CD8-positive, alpha-beta T cell (primary cell): ENCODE measurements at regions of chr15 and their contacts with region 1.

Region 1: GRCh38 chr15:29747837-29748417 is 74.3 kb downstream of the TJP1 start:
- DNase-seq: peak in 1 of 9 experiments; percentile 11
- ATAC-seq: no peak
- H3K4me3 ChIP-seq: no peak overlapping the region
- H3K4me3 Mint-ChIP-seq: no peak overlapping the region
- H3K27ac ChIP-seq: no peak overlapping the region
- H3K27ac Mint-ChIP-seq: no peak overlapping the region
- H3K4me1 ChIP-seq: no peaks in the 10 kb centered on the region
- H3K4me1 Mint-ChIP-seq: no peaks in the 10 kb centered on the region
- H3K27me3 ChIP-seq: no peaks in the 10 kb centered on the region
- H3K27me3 Mint-ChIP-seq: peaks cover 20% of the 10 kb centered on the region
- CTCF ChIP-seq: peak; percentile 44

Region 2: GRCh38 chr15:29704950-29705597 is 42.9 kb before region 1 on chr15:
- CTCF ChIA-PET with region 1: no interaction called
- POLR2A ChIA-PET with region 1: no interaction called
- intact Hi-C with region 1: no loop called
- DNase-seq: no peak
- ATAC-seq: no peak
- H3K4me3 ChIP-seq: no peak overlapping the region
- H3K4me3 Mint-ChIP-seq: no peak overlapping the region
- H3K27ac ChIP-seq: no peak overlapping the region
- H3K27ac Mint-ChIP-seq: no peak overlapping the region
- H3K4me1 ChIP-seq: no peaks in the 10 kb centered on the region
- H3K4me1 Mint-ChIP-seq: no peaks in the 10 kb centered on the region
- H3K27me3 ChIP-seq: no peaks in the 10 kb centered on the region
- H3K27me3 Mint-ChIP-seq: no peaks in the 10 kb centered on the region
- CTCF ChIP-seq: no peak

Region 3: DNA sequence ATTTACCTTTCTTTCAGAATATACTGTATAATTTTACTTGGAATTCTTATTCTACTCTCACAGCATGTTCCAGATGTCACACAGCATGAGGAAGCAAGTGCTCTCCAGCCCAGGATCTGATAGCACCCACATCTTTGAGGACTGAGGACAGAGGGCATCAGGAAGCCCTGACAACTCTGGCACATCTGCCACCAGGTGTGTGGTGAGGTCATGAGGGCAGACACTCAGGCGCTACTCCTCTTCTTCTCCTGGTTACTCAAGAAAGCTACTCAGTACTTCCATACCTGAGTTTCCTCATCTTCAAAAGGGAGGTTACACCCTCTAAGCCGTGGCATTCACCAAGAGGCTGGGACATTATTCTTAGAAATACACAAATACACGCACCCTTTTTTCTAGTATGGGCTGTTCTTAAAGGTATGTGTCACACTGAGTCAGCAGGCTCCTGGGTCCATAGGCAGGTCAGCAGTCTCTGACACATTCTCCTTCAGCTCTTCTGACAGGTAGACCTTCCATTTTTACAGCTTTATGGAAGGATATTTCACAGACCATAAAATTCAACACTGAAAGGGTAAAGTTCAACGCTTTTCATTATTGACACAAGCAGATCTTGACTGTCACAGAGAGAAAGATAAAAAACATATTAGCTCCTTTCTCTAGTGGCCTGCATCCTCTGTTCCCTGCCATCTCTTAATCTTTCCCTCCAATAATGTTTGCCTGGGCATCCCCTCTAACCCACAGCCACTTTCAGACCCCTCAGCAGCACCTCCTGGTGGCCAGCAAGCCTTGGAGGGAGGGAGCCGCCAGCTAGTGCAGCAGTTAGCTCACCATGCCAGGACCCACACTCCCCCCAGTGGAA is 177.5 kb after region 1 on chr15:
- CTCF ChIA-PET with region 1: interaction called, 11 read pairs
- POLR2A ChIA-PET with region 1: no interaction called
- intact Hi-C with region 1: loop called in 1 of 2 experiments (anchors 5 kb)
- DNase-seq: peak in 4 of 9 experiments; percentile 12 to 42 (median 18)
- ATAC-seq: no peak
- H3K4me3 ChIP-seq: no peak overlapping the region
- H3K4me3 Mint-ChIP-seq: no peak overlapping the region
- H3K27ac ChIP-seq: no peak overlapping the region
- H3K27ac Mint-ChIP-seq: no peak overlapping the region
- H3K4me1 ChIP-seq: no peaks in the 10 kb centered on the region
- H3K4me1 Mint-ChIP-seq: no peaks in the 10 kb centered on the region
- H3K27me3 ChIP-seq: no peaks in the 10 kb centered on the region
- H3K27me3 Mint-ChIP-seq: peaks cover 34% of the 10 kb centered on the region
- CTCF ChIP-seq: no peak

Region 4: GRCh38 chr15:30073915-30074314 is 326.0 kb after region 1 on chr15:
- CTCF ChIA-PET with region 1: interaction called, 3 read pairs
- POLR2A ChIA-PET with region 1: no interaction called
- intact Hi-C with region 1: loop called in 1 of 2 experiments (anchors 10 kb)
- DNase-seq: no peak
- ATAC-seq: no peak
- H3K4me3 ChIP-seq: no peak overlapping the region
- H3K4me3 Mint-ChIP-seq: no peak overlapping the region
- H3K27ac ChIP-seq: no peak overlapping the region
- H3K27ac Mint-ChIP-seq: no peak overlapping the region
- H3K4me1 ChIP-seq: no peaks in the 10 kb centered on the region
- H3K4me1 Mint-ChIP-seq: no peaks in the 10 kb centered on the region
- H3K27me3 ChIP-seq: peaks cover 0 to 3% of the 10 kb centered on the region in 2 experiments
- H3K27me3 Mint-ChIP-seq: peaks cover 11% of the 10 kb centered on the region
- CTCF ChIP-seq: no peak